Esophagus muscularis mucosa (tissue), 4 donors: ENCODE measurements at regions of chr13 and their contacts with region 1.

Region 1: DNA sequence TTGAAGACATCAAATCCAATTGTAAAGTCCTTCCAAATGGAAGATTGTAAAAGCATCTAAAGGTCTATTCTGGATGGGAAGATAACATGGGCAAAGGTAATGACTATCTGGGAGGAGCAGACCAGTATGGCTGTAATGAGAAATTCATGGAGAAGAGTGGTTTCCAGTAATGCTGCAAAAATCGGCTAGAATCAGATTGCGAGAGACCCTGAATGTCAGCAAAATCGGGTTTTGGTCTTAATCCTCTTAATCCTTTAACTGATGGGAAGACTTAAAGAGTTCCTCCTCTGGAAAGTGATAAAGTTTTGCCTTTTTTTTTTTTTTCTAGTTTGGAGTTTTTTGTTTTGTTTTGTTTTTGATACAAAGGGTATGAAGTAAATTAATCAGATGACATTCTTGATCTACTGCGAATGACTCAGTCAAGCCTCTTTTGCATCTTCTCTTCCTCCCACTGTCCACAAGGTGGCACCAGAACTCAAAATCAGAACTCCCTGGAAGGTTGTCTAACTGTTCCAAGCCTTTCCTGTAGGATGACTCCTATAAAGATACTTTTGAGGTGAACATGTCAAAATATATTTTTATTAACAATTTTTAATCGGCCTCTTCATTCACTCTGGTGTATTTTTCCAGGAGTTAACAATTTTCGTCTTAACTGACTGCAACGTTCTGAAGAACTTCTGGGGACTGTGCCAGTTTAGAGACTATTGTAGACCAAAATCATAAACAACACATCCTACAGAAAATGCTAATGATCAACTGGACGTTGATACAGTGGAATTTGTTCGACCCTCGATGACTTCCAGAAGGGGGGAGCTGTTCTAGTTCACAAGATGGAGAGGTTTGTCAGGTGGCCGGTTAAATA is 213.3 kb upstream of the MIR17HG start:
- DNase-seq: no peak
- H3K4me3 ChIP-seq: no peak overlapping the region
- H3K27ac ChIP-seq: no peak overlapping the region
- H3K4me1 ChIP-seq: no peaks in the 10 kb centered on the region
- H3K27me3 ChIP-seq: no peaks in the 10 kb centered on the region
- CTCF ChIP-seq: peak; percentile 64 to 75 (median 68)
- EP300 ChIP-seq: no peak
- POLR2A ChIP-seq: no peak

Region 2: GRCh38 chr13:90800082-90800746 is 334.0 kb before region 1 on chr13:
- intact Hi-C with region 1: no loop called
- DNase-seq: no peak
- H3K4me3 ChIP-seq: no peak overlapping the region
- H3K27ac ChIP-seq: no peak overlapping the region
- H3K4me1 ChIP-seq: no peaks in the 10 kb centered on the region
- H3K27me3 ChIP-seq: no peaks in the 10 kb centered on the region
- CTCF ChIP-seq: no peak
- EP300 ChIP-seq: no peak
- POLR2A ChIP-seq: no peak

Region 3: GRCh38 chr13:90824027-90824426 is 310.1 kb before region 1 on chr13:
- intact Hi-C with region 1: no loop called
- DNase-seq: no peak
- H3K4me3 ChIP-seq: no peak overlapping the region
- H3K27ac ChIP-seq: no peak overlapping the region
- H3K4me1 ChIP-seq: no peaks in the 10 kb centered on the region
- H3K27me3 ChIP-seq: no peaks in the 10 kb centered on the region
- CTCF ChIP-seq: no peak
- EP300 ChIP-seq: no peak
- POLR2A ChIP-seq: no peak

Region 4: GRCh38 chr13:91184244-91184926 is 50.2 kb after region 1 on chr13:
- intact Hi-C with region 1: loop called (anchors 5 kb)
- DNase-seq: no peak
- H3K4me3 ChIP-seq: no peak overlapping the region
- H3K27ac ChIP-seq: no peak overlapping the region
- H3K4me1 ChIP-seq: no peaks in the 10 kb centered on the region
- H3K27me3 ChIP-seq: peaks cover 0 to 40% (median 0%) of the 10 kb centered on the region in 4 donors
- CTCF ChIP-seq: no peak
- EP300 ChIP-seq: no peak
- POLR2A ChIP-seq: no peak

Region 5: DNA sequence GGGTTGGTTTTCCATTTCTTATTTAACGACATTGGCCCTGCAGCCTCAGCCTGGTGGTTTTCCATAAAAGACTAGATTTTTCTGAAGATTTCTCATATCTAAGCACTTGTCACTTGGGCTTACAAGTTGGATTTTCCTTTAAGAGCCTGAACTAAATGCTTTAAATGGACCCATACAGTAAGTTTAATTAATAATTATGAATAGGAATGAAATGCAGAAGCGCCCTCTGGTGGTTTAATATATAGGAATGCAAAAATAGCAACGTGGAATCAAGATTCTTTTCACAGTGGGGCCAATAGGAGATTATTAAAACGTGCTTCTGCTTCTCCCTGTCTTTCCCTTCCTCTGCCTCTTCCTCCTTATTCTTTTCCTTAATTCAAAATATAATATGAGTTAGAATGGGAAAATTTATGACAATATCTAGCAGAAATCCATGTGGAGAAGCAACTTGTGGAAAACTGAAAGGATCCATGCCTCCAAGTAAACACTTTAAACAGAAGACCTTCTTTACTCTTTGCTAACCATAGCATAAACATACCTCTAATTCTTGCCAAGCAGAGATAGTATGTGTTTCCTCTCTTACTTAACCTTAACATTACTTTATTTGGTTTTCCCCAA is 588.2 kb after region 1 on chr13:
- intact Hi-C with region 1: loop called (anchors 10 kb)
- DNase-seq: no peak
- H3K4me3 ChIP-seq: no peak overlapping the region
- H3K27ac ChIP-seq: no peak overlapping the region
- H3K4me1 ChIP-seq: no peaks in the 10 kb centered on the region
- H3K27me3 ChIP-seq: no peaks in the 10 kb centered on the region
- CTCF ChIP-seq: peak in 2 of 3 experiments; percentile 51 to 62
- EP300 ChIP-seq: no peak
- POLR2A ChIP-seq: no peak